ENCODE measurements at regions of chr1 and their contacts with region 1.

Region 1: DNA sequence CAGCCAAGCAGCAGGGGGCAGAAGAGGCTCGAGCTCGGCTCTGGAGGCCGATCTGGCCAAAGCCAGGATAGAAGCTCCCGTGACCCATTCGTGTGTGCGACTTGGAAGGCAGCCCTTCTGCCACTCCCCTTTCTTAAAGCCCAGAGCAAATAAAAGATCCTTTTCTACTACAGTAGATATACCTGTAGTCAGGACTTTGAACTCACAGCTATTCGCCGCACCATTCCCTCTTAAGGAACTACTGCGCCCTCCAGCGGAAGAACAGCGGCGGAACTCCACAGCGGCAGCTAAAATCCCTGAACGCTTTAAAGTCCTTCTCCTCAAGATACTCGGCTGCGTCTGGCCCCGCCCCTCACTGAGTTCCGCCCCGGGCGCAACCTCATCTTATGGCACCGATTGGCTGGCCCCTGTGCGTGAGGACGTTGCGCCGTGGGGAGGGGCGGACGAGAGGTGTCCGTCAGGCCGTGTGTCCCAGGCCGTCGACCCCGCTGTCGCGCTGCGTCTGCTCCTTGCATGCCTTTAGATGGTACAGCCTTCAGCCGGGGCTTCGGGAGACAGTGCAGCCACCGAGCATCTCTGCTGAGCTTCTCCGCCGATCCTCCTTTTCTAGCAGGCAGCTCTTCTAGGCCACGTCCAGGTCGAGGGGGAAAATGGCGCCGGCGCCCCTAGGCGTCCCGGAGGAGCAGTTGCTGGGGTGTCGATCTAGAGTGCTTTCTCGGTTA is at the start of gene LRIG2:
- DNase-seq: peak; percentile 98
- H3K4me3 Mint-ChIP-seq: peak within 1 kb of the TSS; percentile 96
- H3K27ac Mint-ChIP-seq: peak within 1 kb of the TSS; percentile 85
- H3K4me1 Mint-ChIP-seq: peaks cover 30% of the 10 kb centered on the region
- H3K27me3 Mint-ChIP-seq: no peaks in the 10 kb centered on the region
- total RNA-seq, gene LRIG2: 9.6 to 10.8 TPM

Region 2: DNA sequence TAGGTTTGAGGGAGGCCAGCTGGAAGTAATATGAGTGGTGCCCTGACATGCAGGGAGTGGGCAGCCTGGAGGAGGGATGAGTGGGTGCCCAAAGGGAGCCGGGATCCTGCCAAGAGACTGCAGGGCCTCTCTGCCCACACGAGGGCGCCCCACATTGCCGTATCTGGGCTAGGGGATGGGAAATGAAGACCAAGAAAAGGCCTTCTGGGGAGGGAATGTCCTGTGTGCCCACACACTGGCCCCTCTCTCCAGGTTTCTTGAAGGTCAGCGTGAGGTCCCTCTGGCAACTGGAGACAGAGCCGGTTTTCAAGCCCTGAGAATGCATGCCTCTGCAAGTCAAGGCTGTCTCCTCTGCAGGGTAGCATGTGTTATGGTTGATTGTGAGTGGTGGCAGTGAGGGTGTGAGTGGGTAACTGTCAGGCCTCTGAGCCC is 263.6 kb before region 1 on chr1:
- CTCF ChIA-PET with region 1: interaction called, 12 read pairs
- POLR2A ChIA-PET with region 1: no interaction called
- DNase-seq: peak; percentile 76
- H3K4me3 Mint-ChIP-seq: no peak overlapping the region
- H3K27ac Mint-ChIP-seq: no peak overlapping the region
- H3K4me1 Mint-ChIP-seq: peaks cover 3% of the 10 kb centered on the region
- H3K27me3 Mint-ChIP-seq: peaks cover 29% of the 10 kb centered on the region

Region 3: DNA sequence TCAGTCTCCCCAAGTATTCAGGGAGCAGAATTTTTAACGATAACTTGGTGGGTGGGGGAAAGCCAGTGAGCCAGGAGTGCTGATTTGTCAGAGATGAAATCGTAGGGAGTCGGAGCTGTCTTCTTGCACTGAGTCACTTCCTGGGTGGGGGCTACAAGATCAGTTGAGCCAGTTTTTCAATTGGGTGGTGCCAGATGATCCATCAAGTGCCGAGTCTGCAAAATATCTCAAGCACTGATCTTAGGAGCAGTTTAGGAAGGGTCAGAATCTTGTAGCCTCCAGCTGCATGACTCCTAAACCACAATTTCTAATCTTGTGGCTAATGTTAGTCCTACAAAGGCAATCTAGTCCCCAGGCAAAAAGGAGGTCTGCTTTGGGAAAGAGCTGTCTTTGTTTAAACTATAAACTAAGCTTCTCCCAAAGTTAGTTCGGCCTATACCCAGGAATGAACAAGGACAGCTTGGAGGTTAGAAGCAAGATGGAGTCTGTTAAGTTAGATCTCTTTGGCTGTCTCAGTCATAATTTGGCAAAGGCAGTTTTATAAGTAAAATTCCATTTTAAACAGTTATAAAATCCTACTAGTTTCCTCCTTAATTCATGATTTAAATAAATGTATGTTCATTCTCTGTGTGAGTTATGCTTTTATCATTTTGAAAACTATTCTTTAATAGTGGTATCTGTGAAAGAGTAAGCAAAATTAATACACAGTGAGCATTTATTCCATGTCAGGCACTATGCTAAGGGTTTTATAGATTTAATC is 168.7 kb before region 1 on chr1:
- CTCF ChIA-PET with region 1: interaction called, 11 read pairs
- POLR2A ChIA-PET with region 1: interaction called, 3 read pairs
- DNase-seq: peak; percentile 61
- H3K4me3 Mint-ChIP-seq: peak overlapping the region; percentile 25
- H3K27ac Mint-ChIP-seq: peak overlapping the region; percentile 73
- H3K4me1 Mint-ChIP-seq: peaks cover 35% of the 10 kb centered on the region
- H3K27me3 Mint-ChIP-seq: no peaks in the 10 kb centered on the region

Region 4: DNA sequence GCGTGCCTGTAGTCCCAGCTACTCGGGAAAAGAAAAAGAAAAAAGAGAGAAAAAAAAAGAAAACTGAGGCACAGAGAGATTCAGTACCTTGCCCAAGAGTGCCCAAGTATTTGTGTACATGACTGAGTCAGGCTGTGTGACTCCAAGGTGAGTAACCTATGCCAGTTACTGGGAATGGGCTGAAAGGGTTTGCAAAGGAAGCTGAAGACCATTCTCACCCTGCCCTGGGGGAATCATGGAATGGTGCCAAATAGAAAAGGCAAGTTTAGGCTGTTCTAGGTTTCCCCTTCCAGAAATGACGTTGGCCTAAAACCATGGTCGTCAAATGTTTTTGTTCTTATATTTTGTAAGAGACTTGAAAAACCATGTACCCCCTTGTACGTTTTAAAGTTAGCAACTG is 37.8 kb before region 1 on chr1:
- CTCF ChIA-PET with region 1: interaction called, 11 read pairs
- POLR2A ChIA-PET with region 1: no interaction called
- DNase-seq: no peak
- H3K4me3 Mint-ChIP-seq: no peak overlapping the region
- H3K27ac Mint-ChIP-seq: no peak overlapping the region
- H3K4me1 Mint-ChIP-seq: peaks cover 14% of the 10 kb centered on the region
- H3K27me3 Mint-ChIP-seq: no peaks in the 10 kb centered on the region

Region 5: DNA sequence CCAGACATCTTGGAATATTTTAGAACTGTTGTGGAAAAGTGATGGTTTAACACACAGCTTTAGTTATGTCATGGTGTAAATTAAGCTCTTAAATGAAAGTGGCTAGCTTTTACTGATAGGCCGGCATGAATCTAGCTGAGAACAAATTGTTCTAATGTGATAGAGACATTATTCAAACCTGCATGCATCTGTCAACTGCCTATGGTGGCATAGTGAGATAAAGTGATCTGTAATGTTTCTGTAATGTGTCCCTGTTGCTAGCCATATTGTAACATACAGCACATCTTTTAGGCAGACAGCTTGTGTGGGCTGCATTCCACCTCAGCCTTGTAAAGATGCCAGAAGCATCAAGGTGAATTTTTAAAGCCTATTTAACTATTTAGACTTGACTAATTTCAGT is 16.1 kb after region 1 on chr1:
- CTCF ChIA-PET with region 1: interaction called, 17 read pairs
- POLR2A ChIA-PET with region 1: interaction called, 3 read pairs
- DNase-seq: no peak
- H3K4me3 Mint-ChIP-seq: no peak overlapping the region
- H3K27ac Mint-ChIP-seq: no peak overlapping the region
- H3K4me1 Mint-ChIP-seq: peaks cover 9% of the 10 kb centered on the region
- H3K27me3 Mint-ChIP-seq: no peaks in the 10 kb centered on the region

Region 6: DNA sequence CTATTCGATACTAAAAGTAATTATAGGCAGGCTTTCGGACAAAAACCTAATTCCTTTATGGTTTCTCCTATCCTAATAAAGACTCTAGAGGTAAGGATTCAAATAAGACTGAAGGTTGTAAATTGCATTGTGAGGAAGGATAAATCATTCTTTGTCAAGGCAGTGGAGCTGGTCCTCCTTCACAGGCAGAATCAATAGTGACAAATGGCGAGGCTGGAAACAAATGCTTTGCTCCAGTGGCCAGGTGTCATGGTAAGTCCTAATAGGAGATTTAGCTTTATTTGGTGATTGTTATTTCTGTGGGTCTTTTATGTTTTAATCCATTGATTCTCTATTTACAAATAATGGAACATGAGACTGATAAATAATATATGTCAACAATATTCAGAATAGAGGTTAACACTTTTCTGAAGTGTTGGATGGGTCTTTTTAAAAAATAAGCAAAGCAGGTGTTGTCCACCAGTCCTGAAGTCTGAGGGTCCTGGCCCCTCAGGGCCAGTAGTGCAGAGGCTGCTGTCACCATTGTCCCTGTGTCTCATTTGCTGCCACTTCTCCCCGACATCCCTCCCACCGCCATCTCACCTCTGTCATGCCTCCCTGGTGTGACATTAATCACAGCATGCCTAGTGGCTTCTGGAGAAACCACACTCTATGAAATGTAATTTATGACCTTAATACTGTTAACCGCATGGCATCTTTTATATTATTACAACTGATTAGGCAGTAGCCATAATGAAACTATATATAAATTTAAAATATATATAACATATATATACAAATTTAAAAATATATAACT is 196.4 kb after region 1 on chr1:
- CTCF ChIA-PET with region 1: no interaction called
- POLR2A ChIA-PET with region 1: no interaction called
- DNase-seq: no peak
- H3K4me3 Mint-ChIP-seq: no peak overlapping the region
- H3K27ac Mint-ChIP-seq: no peak overlapping the region
- H3K4me1 Mint-ChIP-seq: peaks cover 3% of the 10 kb centered on the region
- H3K27me3 Mint-ChIP-seq: peaks cover 10% of the 10 kb centered on the region

Measured in activated CD4-positive, alpha-beta memory T cell treated with anti-CD3 and anti-CD28 coated beads, Interleukin-2, amount 10 ng/mL, durations not matched to agents 7 days and 5 days (primary cell).